Right lobe of liver (tissue), 6 donors: ENCODE measurements at regions of chr1 and their contacts with region 1.

Region 1: GRCh38 chr1:179365320-179366092 is at the start of gene AXDND1:
- DNase-seq: peak; percentile 87 to 92 (median 90)
- ATAC-seq: peak; percentile 96 to 98 (median 98)
- H3K4me3 ChIP-seq: peak within 1 kb of the TSS; percentile 62 to 77 (median 74)
- H3K27ac ChIP-seq: peak within 1 kb of the TSS; percentile 77 to 87 (median 84)
- H3K4me1 ChIP-seq: peaks cover 0 to 5% (median 0%) of the 10 kb centered on the region in 4 donors
- H3K27me3 ChIP-seq: no peaks in the 10 kb centered on the region
- CTCF ChIP-seq: peak in 3 of 4 donors; percentile 22 to 36 (median 27)
- POLR2A ChIP-seq: peak; percentile 63
- total RNA-seq, gene AXDND1: 0.09 TPM in 1 of 6 experiments, not detected in the others

Region 2: GRCh38 chr1:179121159-179121938 is 244.2 kb before region 1 on chr1:
- intact Hi-C with region 1: no loop called
- DNase-seq: no peak
- ATAC-seq: peak; percentile 70 to 83 (median 76)
- H3K4me3 ChIP-seq: no peak overlapping the region
- H3K27ac ChIP-seq: no peak overlapping the region
- H3K4me1 ChIP-seq: peaks cover 0 to 17% (median 5%) of the 10 kb centered on the region in 4 donors
- H3K27me3 ChIP-seq: no peaks in the 10 kb centered on the region
- CTCF ChIP-seq: peak; percentile 65 to 68 (median 66)
- POLR2A ChIP-seq: no peak

Region 3: DNA sequence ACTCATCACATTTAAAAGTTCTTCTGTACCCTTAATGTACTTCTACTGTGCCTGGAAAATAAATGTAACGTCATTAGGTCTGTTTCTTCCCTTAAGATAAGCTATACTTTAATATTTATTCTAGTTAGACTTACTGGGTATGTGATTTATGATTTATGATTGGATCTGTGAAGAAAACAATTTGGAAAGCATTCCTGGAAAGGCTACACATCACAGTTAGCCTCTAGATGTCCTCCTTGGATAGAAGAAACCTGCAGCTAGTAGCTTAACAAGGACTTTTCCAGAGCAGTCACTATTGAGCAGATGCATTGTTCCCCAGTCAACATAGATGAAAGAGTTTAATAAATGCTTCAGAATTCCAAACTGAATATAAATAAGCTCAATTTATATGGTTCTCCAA is 113.8 kb before region 1 on chr1:
- intact Hi-C with region 1: loop called in 1 of 2 experiments (anchors 10 kb)
- DNase-seq: no peak
- ATAC-seq: peak; percentile 81 to 95 (median 90)
- H3K4me3 ChIP-seq: no peak overlapping the region
- H3K27ac ChIP-seq: no peak overlapping the region
- H3K4me1 ChIP-seq: no peaks in the 10 kb centered on the region
- H3K27me3 ChIP-seq: no peaks in the 10 kb centered on the region
- CTCF ChIP-seq: peak; percentile 49 to 62 (median 57)
- POLR2A ChIP-seq: no peak

Region 4: DNA sequence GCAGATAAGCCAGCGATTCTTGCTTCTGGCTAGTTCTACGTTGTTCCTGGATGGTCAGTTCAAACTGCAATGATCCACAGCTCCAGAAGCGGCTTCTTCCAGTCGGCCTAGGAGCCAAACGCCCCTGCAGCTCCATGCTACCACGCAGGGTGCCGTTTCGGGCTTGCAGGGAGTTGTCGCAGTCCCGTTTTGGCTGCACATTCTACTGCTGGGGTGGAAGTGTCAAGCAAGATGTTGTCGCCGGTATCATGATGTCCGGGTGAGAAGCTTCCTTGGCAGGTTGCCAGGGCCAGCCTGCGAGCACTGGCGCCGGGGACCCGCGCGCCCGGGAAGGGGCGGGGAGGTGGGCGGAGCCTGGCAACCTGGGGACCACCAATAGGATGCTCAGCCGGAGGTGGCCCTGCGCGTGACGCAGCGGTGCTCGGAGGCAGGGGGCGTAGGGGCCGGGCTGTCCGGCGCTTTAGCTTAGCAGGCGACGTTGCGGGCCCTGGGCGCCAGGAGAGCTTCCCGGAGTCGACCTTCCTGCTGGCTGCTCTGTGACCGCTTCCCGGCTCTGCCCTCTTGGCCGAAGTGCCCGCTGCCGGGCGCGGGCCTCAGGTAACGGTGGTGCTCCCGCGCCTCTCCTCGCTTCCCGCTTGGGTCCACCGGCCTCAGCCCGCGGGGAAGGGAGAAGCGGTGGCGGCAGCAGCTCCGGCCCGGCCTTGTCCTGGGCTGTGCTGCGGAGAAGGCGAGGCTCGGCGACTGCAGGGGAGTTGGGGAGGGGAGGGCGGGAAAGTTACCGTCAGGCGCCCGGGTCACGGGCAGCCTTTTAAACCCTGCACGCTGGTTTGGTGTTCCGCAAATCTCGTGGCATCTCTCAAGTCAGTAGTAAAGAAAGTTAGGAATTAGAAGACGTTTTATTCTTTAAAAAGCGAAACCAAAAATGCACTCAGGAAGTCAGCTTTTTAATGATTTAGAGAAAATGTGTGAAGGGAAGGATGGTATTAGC is 71.9 kb before region 1 on chr1 and contains the start of gene SOAT1:
- intact Hi-C with region 1: loop called in 1 of 2 experiments (anchors 10 kb)
- DNase-seq: peak; percentile 98 to 99 (median 98)
- ATAC-seq: peak; percentile 96 to 99 (median 98)
- H3K4me3 ChIP-seq: peak within 1 kb of the TSS; percentile 65 to 81 (median 72)
- H3K27ac ChIP-seq: peak within 1 kb of the TSS; percentile 83 to 96 (median 93)
- H3K4me1 ChIP-seq: peaks cover 0 to 39% (median 12%) of the 10 kb centered on the region in 4 donors
- H3K27me3 ChIP-seq: no peaks in the 10 kb centered on the region
- CTCF ChIP-seq: peak in 3 of 4 donors; percentile 5 to 40 (median 23)
- POLR2A ChIP-seq: peak; percentile 95
- total RNA-seq, gene SOAT1: 5.8 to 20.5 (median 14.3) TPM

Region 5: DNA sequence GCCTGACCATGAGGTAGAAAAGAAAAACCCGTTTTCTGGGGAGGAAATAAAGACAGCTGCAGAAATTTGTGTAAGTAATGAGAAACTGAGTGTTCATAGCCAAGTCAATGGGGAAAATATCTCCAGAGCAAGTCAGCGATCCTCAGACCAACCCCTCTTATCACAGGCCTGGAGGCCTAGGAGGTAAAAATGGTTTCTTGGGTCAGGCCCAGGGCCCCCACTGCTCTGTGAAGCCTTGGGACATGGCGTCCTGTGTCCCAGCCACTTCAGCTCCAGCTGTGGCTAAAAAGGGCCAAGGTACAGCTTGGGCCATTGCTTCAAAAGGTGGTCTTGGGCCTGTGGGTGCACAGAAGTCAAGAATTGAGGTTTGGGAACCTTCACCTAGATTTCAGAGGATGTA is 109.2 kb after region 1 on chr1:
- intact Hi-C with region 1: no loop called
- DNase-seq: no peak
- ATAC-seq: no peak
- H3K4me3 ChIP-seq: no peak overlapping the region
- H3K27ac ChIP-seq: no peak overlapping the region
- H3K4me1 ChIP-seq: no peaks in the 10 kb centered on the region
- H3K27me3 ChIP-seq: no peaks in the 10 kb centered on the region
- CTCF ChIP-seq: no peak
- POLR2A ChIP-seq: no peak

Region 6: GRCh38 chr1:179493323-179493722 is 127.8 kb after region 1 on chr1:
- intact Hi-C with region 1: no loop called
- DNase-seq: no peak
- ATAC-seq: no peak
- H3K4me3 ChIP-seq: no peak overlapping the region
- H3K27ac ChIP-seq: no peak overlapping the region
- H3K4me1 ChIP-seq: no peaks in the 10 kb centered on the region
- H3K27me3 ChIP-seq: no peaks in the 10 kb centered on the region
- CTCF ChIP-seq: no peak
- POLR2A ChIP-seq: no peak